Activated B cell treated with CpG ODN at 0.5 μM for 24 hours (primary cell): ENCODE measurements at regions of chr4 and their contacts with region 1.

Region 1: DNA sequence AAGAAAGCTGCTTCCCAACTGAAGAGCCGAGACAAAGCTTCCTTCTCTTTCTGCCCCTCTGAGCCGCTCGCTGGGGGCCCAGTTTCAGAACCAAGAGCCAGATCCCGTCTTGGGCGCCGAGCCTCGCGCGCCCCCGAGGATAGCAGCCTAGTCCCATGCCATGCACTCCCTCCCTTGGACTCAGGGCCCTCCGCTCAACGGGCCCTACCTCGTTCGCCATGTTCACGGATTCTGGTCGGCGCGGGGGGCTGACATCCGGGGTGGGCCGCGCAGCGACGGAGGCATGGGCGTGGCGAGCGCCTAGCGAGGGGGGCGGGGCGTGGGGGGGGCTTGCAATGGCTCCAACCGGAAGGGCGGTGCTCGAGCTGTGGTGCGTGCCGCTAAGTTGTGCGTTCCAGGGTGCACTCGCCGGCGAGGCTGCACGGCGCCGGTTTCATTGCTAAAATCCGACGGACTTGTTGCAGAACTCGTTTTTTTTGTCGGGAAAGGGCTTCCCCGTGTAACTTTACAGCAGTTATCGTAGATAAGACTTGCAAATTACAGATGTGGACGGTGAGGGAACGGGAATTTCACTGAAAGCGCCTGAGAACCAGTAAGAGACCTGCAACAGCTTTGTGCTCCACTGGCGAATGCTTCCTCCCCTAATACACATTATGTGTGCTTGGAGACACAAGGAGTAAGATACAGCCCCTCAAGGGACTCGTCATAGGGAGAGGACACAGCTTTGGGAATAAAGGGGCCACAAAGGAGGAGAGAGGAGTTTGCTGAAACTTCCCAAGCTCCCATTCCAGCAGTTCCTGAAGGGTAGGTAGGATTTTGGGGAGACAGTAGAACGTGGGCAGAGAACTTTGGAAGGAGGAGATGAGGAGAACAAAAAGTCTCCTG is at the start of gene ADH5:
- DNase-seq: peak; percentile 77
- ATAC-seq: peak; percentile 95
- H3K4me3 Mint-ChIP-seq: peak within 1 kb of the TSS; percentile 99
- H3K27ac Mint-ChIP-seq: peak within 1 kb of the TSS; percentile 99
- H3K4me1 Mint-ChIP-seq: peaks cover 41% of the 10 kb centered on the region
- H3K27me3 Mint-ChIP-seq: no peaks in the 10 kb centered on the region
- CTCF ChIP-seq: no peak
- total RNA-seq, gene ADH5: 70.1 and 74.2 TPM in 2 replicates

Region 2: GRCh38 chr4:99054428-99054994 is 34.2 kb before region 1 on chr4:
- CTCF ChIA-PET with region 1: interaction called, 5 read pairs
- POLR2A ChIA-PET with region 1: interaction called, 12 read pairs
- intact Hi-C with region 1: loop called (anchors 2 kb)
- DNase-seq: no peak
- ATAC-seq: no peak
- H3K4me3 Mint-ChIP-seq: no peak overlapping the region
- H3K27ac Mint-ChIP-seq: no peak overlapping the region
- H3K4me1 Mint-ChIP-seq: peaks cover 9% of the 10 kb centered on the region
- H3K27me3 Mint-ChIP-seq: no peaks in the 10 kb centered on the region
- CTCF ChIP-seq: no peak

Region 3: DNA sequence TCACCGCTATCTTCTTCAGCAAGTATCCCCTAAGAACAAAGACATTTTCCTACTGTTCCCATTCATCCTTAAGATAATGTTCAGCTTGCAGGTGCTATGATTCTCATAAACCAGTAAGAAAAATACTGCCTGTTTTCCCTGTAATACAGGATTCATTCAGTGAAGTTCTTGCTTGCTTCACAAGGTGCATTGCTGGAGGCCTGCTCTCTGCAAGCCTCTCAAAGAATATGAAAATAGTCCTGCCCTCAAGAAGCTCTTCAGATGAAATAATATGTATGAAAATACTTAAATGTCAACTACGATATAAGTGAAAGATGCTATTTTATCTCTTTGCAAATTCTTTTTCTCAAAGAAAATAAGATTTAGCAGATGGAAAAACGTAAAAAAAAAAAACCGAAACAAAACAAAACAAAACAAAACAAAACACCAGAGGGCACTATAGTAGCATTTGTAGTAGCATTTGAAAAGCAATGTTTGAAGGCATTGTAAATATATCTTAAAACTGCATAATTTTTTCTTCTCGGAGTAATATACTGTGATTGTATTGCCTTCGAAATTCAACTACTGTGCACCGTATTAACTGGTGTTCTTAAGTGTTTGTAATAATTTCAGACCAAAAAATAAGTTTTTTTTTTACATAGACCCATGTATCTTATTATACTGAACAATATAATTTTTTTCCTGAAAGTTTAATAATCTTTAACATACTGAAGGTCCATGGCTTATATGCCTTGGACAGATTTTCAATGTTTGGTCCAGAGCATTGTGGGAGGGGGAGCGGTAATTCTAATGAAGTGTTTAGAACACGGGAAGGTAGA is 29.4 kb after region 1 on chr4:
- CTCF ChIA-PET with region 1: no interaction called
- POLR2A ChIA-PET with region 1: no interaction called
- intact Hi-C with region 1: loop called (anchors 1 kb)
- DNase-seq: no peak
- ATAC-seq: no peak
- H3K4me3 Mint-ChIP-seq: no peak overlapping the region
- H3K27ac Mint-ChIP-seq: no peak overlapping the region
- H3K4me1 Mint-ChIP-seq: no peaks in the 10 kb centered on the region
- H3K27me3 Mint-ChIP-seq: peaks cover 2% of the 10 kb centered on the region
- CTCF ChIP-seq: no peak

Region 4: GRCh38 chr4:99894161-99894997 is 805.7 kb after region 1 on chr4 and contains the start of gene LAMTOR3:
- CTCF ChIA-PET with region 1: no interaction called
- POLR2A ChIA-PET with region 1: interaction called, 4 read pairs
- intact Hi-C with region 1: loop called (anchors 1 kb)
- DNase-seq: peak; percentile 78
- ATAC-seq: peak; percentile 98
- H3K4me3 Mint-ChIP-seq: peak within 1 kb of the TSS; percentile 94
- H3K27ac Mint-ChIP-seq: peak within 1 kb of the TSS; percentile 90
- H3K4me1 Mint-ChIP-seq: peaks cover 26% of the 10 kb centered on the region
- H3K27me3 Mint-ChIP-seq: no peaks in the 10 kb centered on the region
- CTCF ChIP-seq: no peak
- total RNA-seq, gene LAMTOR3: 21.9 and 23.8 TPM in 2 replicates